Activated B cell treated with CpG ODN at 0.5 μM for 24 hours (primary cell): ENCODE measurements at regions of chr12 and their contacts with region 1.

Region 1: DNA sequence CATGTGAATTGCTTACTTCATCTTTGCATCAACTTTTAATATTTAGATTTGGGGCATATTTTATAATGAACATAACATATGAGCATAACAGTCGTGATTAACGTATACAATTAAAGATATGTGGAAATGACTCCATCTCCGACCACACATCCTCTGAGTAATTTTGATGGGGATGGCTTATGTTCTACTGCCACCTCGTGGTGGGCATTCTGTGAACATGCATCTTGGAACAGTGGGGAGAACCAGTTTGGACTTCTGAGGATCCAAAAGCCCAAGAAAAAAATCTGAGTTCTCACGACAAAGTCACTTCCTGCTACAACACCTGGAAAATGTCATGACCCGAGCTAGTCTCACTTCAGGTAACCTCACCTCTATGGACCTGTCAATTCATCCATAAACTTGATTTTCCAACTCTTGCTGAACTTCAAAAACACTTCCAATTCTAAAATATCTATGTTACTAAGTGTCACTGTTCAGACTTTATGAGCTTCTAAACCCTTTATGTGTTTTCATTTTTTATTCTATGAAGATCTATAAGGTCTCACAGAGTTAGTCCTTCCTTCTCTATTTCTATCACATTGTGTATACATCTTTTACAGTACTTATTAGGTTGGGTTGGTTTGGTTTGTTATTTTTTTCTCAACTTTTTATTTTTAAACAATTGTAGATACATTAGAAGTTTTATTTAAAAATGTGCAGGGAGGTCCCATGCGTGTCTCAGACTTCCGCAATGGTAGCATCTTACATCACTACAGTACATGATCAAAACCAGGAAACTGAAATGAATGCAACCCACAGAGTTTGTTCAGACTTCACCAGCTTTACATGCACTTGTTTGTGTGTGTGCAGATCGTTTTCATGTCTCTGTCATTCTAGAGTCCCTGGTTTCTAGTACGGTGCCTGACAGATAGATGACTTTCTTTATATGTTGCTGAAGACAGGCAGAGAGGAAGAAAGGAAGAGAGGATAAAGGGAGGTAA is 38.2 kb upstream of the STAB2 start:
- DNase-seq: peak; percentile 44
- ATAC-seq: peak; percentile 74
- H3K4me3 Mint-ChIP-seq: no peak overlapping the region
- H3K27ac Mint-ChIP-seq: peak overlapping the region; percentile 62
- H3K4me1 Mint-ChIP-seq: peaks cover 13% of the 10 kb centered on the region
- H3K27me3 Mint-ChIP-seq: peaks cover 9% of the 10 kb centered on the region
- CTCF ChIP-seq: peak; percentile 90

Region 2: DNA sequence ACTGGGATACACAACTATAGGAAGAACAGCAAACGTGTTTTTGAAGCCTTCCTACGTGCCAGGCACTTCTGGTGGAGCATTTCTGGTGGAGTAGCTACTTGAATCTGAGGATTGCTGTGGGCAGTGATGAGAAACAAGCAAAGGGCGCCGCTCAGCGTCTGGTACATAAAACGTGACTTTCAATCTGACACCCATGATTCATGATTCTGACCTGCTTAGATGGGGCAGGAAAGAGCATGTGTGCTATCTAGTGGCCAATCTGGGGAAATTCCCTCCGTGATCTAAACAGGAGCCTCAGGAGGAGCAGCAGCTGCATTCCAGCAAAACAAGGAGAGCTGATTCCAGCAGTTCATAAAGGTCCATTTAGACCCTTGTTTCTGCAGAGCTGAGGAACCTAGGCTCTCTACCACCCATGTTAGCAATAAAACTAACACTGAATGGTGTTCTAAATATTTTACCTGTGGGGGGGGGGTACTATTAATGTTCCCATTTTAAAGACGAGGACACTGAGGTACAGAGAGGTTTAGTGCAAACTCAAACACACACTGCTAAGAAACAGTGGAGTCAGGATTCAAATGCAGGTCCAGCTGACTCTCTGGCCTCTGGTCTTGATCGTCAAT is 669.7 kb before region 1 on chr12:
- CTCF ChIA-PET with region 1: interaction called, 113 read pairs
- POLR2A ChIA-PET with region 1: no interaction called
- intact Hi-C with region 1: loop called (anchors 1 kb)
- DNase-seq: no peak
- ATAC-seq: peak; percentile 60
- H3K4me3 Mint-ChIP-seq: no peak overlapping the region
- H3K27ac Mint-ChIP-seq: no peak overlapping the region
- H3K4me1 Mint-ChIP-seq: peaks cover 3% of the 10 kb centered on the region
- H3K27me3 Mint-ChIP-seq: peaks cover 18% of the 10 kb centered on the region
- CTCF ChIP-seq: no peak

Region 3: GRCh38 chr12:102948941-102949352 is 600.0 kb before region 1 on chr12:
- CTCF ChIA-PET with region 1: interaction called, 171 read pairs
- POLR2A ChIA-PET with region 1: interaction called, 6 read pairs
- intact Hi-C with region 1: loop called (anchors 1 kb)
- DNase-seq: peak; percentile 51
- ATAC-seq: peak; percentile 25
- H3K4me3 Mint-ChIP-seq: no peak overlapping the region
- H3K27ac Mint-ChIP-seq: no peak overlapping the region
- H3K4me1 Mint-ChIP-seq: peaks cover 13% of the 10 kb centered on the region
- H3K27me3 Mint-ChIP-seq: peaks cover 54% of the 10 kb centered on the region
- CTCF ChIP-seq: peak; percentile 100

Region 4: GRCh38 chr12:103326190-103326589 is 222.7 kb before region 1 on chr12:
- CTCF ChIA-PET with region 1: interaction called, 18 read pairs
- POLR2A ChIA-PET with region 1: no interaction called
- intact Hi-C with region 1: loop called (anchors 1 kb)
- DNase-seq: no peak
- ATAC-seq: peak; percentile 42
- H3K4me3 Mint-ChIP-seq: no peak overlapping the region
- H3K27ac Mint-ChIP-seq: no peak overlapping the region
- H3K4me1 Mint-ChIP-seq: no peaks in the 10 kb centered on the region
- H3K27me3 Mint-ChIP-seq: no peaks in the 10 kb centered on the region
- CTCF ChIP-seq: no peak

Region 5: GRCh38 chr12:103415681-103416080 is 133.2 kb before region 1 on chr12:
- CTCF ChIA-PET with region 1: no interaction called
- POLR2A ChIA-PET with region 1: no interaction called
- intact Hi-C with region 1: no loop called
- DNase-seq: no peak
- ATAC-seq: no peak
- H3K4me3 Mint-ChIP-seq: no peak overlapping the region
- H3K27ac Mint-ChIP-seq: no peak overlapping the region
- H3K4me1 Mint-ChIP-seq: peaks cover 6% of the 10 kb centered on the region
- H3K27me3 Mint-ChIP-seq: no peaks in the 10 kb centered on the region
- CTCF ChIP-seq: no peak

Region 6: DNA sequence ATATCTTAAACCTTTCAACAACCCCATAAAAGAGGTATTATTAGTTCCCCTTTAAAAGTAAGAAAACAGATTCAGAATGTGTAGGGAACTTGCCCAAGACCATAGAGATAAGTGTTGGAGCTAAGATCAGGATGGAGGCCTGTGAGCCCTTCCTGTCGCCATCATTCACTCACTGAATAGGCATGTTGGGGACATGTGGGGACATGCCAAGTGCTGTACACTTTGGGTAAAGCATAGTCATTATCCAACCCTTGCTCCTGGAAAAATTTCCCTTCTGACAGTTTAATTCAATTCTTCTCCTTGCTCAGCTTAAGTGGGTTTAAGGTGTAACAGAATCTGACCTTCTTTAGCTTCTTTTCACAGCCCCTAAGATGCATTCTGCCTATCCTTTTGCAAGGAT is 25.1 kb before region 1 on chr12:
- CTCF ChIA-PET with region 1: interaction called, 20 read pairs
- POLR2A ChIA-PET with region 1: no interaction called
- intact Hi-C with region 1: no loop called
- DNase-seq: no peak
- ATAC-seq: no peak
- H3K4me3 Mint-ChIP-seq: no peak overlapping the region
- H3K27ac Mint-ChIP-seq: no peak overlapping the region
- H3K4me1 Mint-ChIP-seq: peaks cover 15% of the 10 kb centered on the region
- H3K27me3 Mint-ChIP-seq: no peaks in the 10 kb centered on the region
- CTCF ChIP-seq: no peak

Region 7: DNA sequence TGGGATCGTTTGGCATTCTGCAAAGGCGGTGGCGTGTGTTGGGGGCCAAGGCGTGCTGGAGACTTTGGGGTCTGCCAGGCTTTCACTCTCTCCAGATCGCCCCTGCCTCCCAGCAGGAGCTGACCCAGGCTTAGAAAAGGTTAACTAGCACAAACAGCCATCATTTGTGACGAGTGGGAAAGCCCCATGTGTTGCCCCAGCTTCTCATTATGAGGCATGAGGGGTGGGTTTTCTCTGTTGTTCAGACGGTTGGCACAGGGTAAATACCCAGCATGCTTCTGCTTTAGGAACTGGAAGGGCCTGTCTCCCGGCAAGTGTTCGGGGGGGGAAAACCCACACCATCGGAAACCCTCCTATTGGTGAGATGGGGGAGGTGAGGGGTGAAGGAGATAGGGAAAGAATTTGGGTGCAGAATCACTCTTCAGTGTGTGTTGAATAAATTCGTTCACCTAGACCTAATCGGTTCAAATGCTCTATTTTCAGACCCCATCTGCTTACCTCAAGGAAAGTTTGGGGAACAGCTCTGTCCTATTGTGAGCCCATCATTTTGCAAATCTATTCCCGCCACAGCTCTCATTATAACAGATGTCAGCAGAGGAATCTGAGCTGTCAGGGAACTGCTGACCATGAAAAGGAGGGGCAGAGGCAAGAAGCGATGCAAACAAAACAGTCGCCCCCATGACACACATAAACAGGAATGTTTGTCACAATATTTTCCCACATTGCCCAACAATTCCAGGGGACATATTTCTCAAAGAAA is 18.4 kb before region 1 on chr12:
- CTCF ChIA-PET with region 1: interaction called, 20 read pairs
- POLR2A ChIA-PET with region 1: no interaction called
- intact Hi-C with region 1: no loop called
- DNase-seq: no peak
- ATAC-seq: peak; percentile 80
- H3K4me3 Mint-ChIP-seq: peak overlapping the region; percentile 58
- H3K27ac Mint-ChIP-seq: peak overlapping the region; percentile 72
- H3K4me1 Mint-ChIP-seq: peaks cover 25% of the 10 kb centered on the region
- H3K27me3 Mint-ChIP-seq: no peaks in the 10 kb centered on the region
- CTCF ChIP-seq: no peak